ENCODE measurements at regions of chr10 and their contacts with region 1.

Region 1: DNA sequence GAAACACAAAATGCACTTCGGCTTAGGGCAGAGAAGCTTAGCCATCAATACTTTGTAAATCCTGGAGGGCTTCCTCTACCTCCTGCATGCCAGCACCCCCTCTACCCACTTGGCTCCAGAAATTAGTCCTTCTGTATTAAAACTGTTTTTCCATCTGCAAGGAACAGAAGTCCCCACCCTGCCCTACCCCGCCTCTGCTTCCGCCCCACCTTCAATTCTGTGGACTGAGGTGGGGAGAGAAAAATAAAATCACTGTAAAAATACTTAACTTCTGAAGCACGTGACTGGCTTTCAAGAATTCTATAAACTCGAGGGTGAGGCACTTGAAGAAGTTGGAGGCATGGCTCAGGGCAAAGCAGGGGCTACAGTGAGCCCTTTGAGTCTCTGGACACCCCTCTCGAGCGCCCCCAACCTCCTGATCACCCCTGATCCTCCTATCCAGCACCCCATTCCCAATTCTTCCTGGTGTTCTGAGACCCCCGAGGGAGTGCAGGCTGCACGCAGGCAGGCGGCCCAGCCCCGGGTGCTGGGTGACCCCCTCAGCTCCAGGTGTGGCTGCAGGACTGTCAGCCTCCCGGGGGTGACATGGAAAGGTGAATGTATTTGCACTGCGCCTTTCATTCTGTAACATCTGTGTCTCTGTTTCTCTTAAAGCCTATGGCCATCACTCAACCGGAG is 7.3 kb upstream of the KIAA1217 start:
- DNase-seq: no peak
- H3K4me3 ChIP-seq: no peak overlapping the region
- H3K27ac ChIP-seq: no peak overlapping the region
- H3K4me1 ChIP-seq: peaks cover 27% of the 10 kb centered on the region
- H3K27me3 ChIP-seq: no peaks in the 10 kb centered on the region
- CTCF ChIP-seq: no peak

Region 2: DNA sequence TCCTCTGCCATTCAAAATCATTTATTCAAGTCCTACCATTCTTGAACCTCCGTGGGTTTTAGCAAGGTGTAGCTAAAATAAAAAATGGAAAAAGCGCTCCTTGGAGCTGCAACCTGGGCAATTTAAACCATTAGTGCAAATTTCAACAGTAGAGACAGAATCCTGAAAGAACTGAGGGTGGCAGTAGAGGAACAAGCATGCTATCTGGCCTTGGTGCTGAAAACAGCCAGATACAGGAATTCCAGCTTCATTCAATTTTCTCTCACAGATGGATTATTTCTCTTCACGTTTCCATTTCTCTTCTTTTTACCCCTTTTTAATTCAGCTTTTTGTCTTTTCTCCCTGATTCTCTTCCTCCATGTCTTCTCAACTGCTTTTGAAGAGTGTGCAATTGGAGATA is 685.1 kb before region 1 on chr10:
- CTCF ChIA-PET with region 1: no interaction called
- POLR2A ChIA-PET with region 1: no interaction called
- intact Hi-C with region 1: loop called (anchors 5 kb)
- DNase-seq: peak; percentile 61
- H3K4me3 ChIP-seq: no peak overlapping the region
- H3K27ac ChIP-seq: no peak overlapping the region
- H3K4me1 ChIP-seq: peaks cover 18% of the 10 kb centered on the region
- H3K27me3 ChIP-seq: no peaks in the 10 kb centered on the region
- CTCF ChIP-seq: peak; percentile 78

Region 3: GRCh38 chr10:24477915-24478314 is 276.3 kb after region 1 on chr10:
- CTCF ChIA-PET with region 1: no interaction called
- POLR2A ChIA-PET with region 1: no interaction called
- intact Hi-C with region 1: no loop called
- DNase-seq: no peak
- H3K4me3 ChIP-seq: no peak overlapping the region
- H3K27ac ChIP-seq: no peak overlapping the region
- H3K4me1 ChIP-seq: peaks cover 22% of the 10 kb centered on the region
- H3K27me3 ChIP-seq: no peaks in the 10 kb centered on the region
- CTCF ChIP-seq: no peak

Measured in A673 (cell line).